GM18951 (cell line): ENCODE measurements at regions of chr7 and their contacts with region 1.

Region 1: GRCh38 chr7:100407285-100408180 is 21.0 kb downstream of the ZCWPW1 start:
- POLR2A ChIP-seq: no peak

Region 2: DNA sequence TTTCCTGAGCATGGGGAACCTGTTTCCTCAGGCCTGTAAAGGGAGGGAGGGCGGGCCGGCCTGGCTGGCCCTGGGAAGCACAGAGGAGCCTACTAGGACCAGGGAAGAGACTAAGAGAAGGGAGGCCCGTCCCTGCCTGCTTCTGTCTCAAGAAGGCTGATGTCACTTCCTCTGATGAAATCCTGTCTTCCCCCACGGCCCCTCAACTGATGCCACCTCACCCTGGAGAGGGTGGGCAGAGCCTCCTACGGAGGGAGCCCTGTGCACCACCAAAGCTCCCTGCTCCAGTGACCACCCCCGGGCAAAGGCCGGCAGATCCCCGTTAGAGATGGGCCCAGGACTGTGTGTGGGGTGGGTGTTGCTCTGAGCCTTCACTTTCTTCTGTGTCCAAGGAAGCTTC is 35.3 kb before region 1 on chr7:
- in situ Hi-C with region 1: loop called (anchors 5 kb)
- POLR2A ChIP-seq: no peak